ENCODE measurements at regions of chr9 and their contacts with region 1.

Region 1: DNA sequence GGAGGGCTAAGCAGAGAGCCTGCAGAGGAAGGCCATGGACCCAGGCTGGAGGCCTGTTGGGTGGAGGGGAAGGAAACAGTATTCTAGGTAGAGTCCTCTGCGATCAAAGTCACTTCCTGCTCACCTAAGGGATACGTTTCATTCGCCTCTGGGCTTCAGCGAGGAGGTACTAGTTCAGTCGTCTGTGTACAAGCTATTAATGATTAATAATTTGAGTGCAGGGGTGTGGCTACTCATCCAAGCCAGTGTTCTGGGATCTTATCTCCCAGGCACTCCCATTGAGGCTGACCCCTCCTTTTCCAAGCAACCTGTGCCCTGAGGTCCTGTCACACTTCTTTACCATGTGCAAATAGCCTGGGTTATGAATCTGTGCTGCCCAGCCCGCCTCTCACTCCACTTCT is 25.2 kb downstream of the RALGPS1 start:
- DNase-seq: no peak
- H3K4me3 ChIP-seq: no peak overlapping the region
- H3K27ac ChIP-seq: no peak overlapping the region
- H3K4me1 ChIP-seq: no peaks in the 10 kb centered on the region
- H3K27me3 ChIP-seq: no peaks in the 10 kb centered on the region
- CTCF ChIP-seq: no peak

Region 2: GRCh38 chr9:126661521-126662220 is 278.1 kb before region 1 on chr9:
- CTCF ChIA-PET with region 1: no interaction called
- POLR2A ChIA-PET with region 1: interaction called, 22 read pairs
- intact Hi-C with region 1: no loop called
- DNase-seq: peak; percentile 85 to 92
- H3K4me3 ChIP-seq: no peak overlapping the region
- H3K27ac ChIP-seq: peak overlapping the region; percentile 55
- H3K4me1 ChIP-seq: peaks cover 45% of the 10 kb centered on the region
- H3K27me3 ChIP-seq: no peaks in the 10 kb centered on the region
- CTCF ChIP-seq: no peak; the same call in 1 of the 2 replicates

Region 3: GRCh38 chr9:126965541-126966428 is 26.0 kb after region 1 on chr9:
- CTCF ChIA-PET with region 1: interaction called, 10 read pairs
- POLR2A ChIA-PET with region 1: no interaction called
- intact Hi-C with region 1: no loop called
- DNase-seq: peak in 1 of 2 experiments; percentile 28
- H3K4me3 ChIP-seq: no peak overlapping the region
- H3K27ac ChIP-seq: peak overlapping the region; percentile 63
- H3K4me1 ChIP-seq: peaks cover 19% of the 10 kb centered on the region
- H3K27me3 ChIP-seq: no peaks in the 10 kb centered on the region
- CTCF ChIP-seq: peak; percentile 77

Region 4: DNA sequence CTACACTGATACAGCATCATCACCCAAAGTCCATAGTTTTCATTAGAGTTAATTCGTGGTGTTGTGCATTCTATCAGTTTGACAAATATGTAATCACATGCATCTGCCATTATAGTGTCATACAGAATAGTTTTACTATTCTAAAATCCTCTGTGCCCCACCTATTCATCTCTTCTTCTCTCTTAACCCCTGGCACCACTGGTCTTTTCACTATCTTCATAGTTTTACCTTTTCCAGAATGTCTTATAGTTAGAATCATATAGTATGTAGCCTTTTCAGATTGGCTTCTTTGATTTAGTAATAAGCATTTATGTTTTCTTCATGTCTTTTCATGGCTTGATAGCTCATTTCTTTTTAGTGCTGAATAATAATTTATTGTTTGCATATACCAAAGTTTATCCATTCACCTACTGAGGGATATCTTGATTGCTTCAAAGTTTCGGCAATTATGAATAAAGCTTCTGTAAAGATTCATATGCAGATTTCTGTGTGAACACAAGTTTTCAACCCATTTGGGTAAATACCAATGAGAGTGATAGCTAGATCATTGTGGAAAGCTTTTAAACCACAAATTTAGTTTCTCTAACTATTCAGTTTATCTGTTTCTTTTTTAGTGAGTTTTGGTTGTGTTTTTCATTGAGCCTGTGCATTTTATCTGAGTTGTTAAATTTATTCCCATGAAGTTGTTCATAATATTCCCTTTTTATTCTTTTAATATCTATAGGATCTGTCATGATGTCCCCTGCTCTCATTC is 59.7 kb after region 1 on chr9:
- CTCF ChIA-PET with region 1: no interaction called
- POLR2A ChIA-PET with region 1: no interaction called
- intact Hi-C with region 1: no loop called
- DNase-seq: no peak
- H3K4me3 ChIP-seq: no peak overlapping the region
- H3K27ac ChIP-seq: no peak overlapping the region
- H3K4me1 ChIP-seq: 0 out of 2 replicates have a peak, but pooled peaks cover under 1% of the 10 kb centered on the region
- H3K27me3 ChIP-seq: no peaks in the 10 kb centered on the region
- CTCF ChIP-seq: no peak

Region 5: DNA sequence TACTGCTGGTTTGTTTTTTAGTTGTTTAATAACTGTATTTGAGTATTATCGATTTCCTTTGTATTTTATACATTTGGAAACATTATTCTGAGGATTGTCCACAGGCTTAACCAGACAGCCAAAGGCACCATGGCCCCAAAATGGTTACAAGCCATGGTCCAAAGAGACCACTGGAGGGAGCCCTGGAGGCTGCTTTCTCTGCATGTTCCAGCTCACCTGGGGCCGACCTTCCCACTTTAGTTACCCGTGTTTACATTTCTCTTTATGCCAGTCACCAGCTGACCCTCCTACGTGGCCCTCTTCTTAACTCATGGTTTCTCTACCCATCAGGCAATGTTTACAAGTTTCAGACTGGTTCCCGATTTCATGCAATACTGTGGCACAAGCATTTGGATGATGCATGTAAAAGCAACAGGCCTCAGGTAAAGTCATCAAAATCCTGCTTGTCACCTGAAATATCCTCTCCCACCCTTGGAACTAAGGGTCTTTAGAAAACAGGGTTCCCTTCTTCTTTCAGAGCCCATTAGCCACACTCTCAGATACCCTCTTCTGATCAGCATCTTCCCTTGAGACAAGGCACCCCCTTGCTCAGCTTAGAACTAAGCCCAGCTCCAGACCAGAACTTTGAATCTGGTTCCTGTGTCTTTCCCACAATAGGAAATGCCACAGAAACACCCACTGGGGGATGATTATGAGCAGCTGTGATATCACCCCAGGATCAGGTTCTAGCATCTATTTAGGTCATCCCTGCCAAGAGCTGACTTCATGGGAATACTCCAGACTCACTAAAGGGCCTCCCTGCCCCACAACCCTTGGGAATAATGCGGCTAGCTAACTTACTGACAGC is 274.8 kb after region 1 on chr9:
- CTCF ChIA-PET with region 1: no interaction called
- POLR2A ChIA-PET with region 1: no interaction called
- intact Hi-C with region 1: loop called (anchors 1 kb)
- DNase-seq: peak; percentile 49 to 75
- H3K4me3 ChIP-seq: no peak overlapping the region
- H3K27ac ChIP-seq: no peak overlapping the region
- H3K4me1 ChIP-seq: 0 out of 2 replicates have a peak, but pooled peaks cover 4% of the 10 kb centered on the region
- H3K27me3 ChIP-seq: no peaks in the 10 kb centered on the region
- CTCF ChIP-seq: peak; percentile 89

Measured in PC-9 (cell line).